ENCODE measurements at regions of chr3 and their contacts with region 1.

Region 1: GRCh38 chr3:108221911-108222852 is at the start of gene IFT57:
- DNase-seq: peak; percentile 93 to 99
- ATAC-seq: peak; percentile 99 to 100 (median 100)
- H3K4me3 ChIP-seq: peak within 1 kb of the TSS; percentile 65 to 91 (median 76)
- H3K27ac ChIP-seq: peak within 1 kb of the TSS in 9 of 10 donors; percentile 23 to 88 (median 72)
- H3K4me1 ChIP-seq: peaks cover 0 to 52% (median 20%) of the 10 kb centered on the region in 9 donors
- H3K27me3 ChIP-seq: no peaks in the 10 kb centered on the region
- CTCF ChIP-seq: no peak
- total RNA-seq, gene IFT57: 15.4 to 29.5 (median 21.0) TPM

Region 2: DNA sequence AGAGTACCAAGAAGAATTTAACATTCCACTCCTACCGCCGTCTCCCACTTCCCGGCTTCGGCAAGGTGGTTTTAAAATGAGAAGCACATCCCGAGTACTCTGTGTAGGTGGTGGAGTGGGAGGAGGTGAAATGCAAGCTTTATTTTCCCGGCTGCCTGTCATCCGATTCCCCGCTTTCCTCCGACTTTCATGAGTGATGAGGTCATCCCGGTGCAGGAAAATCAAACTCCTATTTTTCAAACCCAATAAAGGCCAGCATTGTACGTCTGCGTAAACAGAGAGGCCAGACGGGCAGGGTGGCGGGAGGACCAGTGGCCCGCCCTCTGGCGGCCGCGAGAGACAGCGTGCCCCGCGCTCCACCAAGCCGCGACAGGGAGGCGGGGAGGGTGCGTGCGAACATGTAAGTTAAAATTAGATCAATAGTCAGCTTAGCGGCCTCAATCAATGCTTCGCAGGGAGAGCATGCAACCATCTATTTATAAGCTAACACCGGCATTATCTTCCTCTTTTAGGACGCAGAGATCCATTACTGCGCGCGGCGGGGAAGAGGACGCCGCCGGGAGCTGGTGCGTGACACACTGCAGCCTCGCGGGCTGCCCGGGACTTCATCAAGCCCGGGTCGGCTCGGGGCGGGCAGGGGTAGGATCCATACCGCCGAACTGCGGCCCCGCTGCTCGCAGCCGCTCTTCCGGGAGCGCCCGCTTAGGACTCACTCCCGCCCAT is 294.7 kb before region 1 on chr3:
- intact Hi-C with region 1: loop called in 1 of 10 experiments (anchors 10 kb)
- DNase-seq: peak; percentile 43 to 73
- ATAC-seq: peak; percentile 95 to 99 (median 97)
- H3K4me3 ChIP-seq: peak overlapping the region; percentile 23 to 72 (median 58)
- H3K27ac ChIP-seq: peak overlapping the region in 1 of 10 donors; percentile 5
- H3K4me1 ChIP-seq: peaks cover 0 to 18% (median 8%) of the 10 kb centered on the region in 9 donors
- H3K27me3 ChIP-seq: peaks cover 0 to 21% (median 0%) of the 10 kb centered on the region in 7 donors
- CTCF ChIP-seq: peak; percentile 86 to 98 (median 93)

Region 3: DNA sequence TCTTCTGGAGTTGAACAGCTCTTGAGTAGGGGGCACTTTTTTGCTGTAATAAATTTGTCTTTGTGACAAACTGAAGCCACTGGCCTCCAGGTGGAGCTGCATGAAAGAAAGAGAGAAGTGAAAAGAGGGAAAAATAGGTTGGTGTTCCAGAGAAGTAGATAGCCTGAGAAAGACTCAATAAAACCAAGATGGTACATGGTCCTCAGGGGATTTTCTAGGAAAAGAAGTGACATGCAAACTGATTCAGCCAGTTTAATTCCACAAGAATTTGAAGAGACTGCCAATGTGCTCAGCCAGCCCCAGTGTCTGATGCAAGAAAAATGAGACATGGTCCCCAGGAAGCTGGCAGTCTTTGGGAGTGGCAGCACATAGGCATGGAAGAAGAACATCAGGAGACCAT is 284.0 kb before region 1 on chr3:
- intact Hi-C with region 1: loop called in 3 of 10 experiments (anchors 5 to 10 kb)
- DNase-seq: peak in 1 of 2 donors; percentile 13
- ATAC-seq: peak in 3 of 8 donors; percentile 39 to 51 (median 42)
- H3K4me3 ChIP-seq: no peak overlapping the region
- H3K27ac ChIP-seq: no peak overlapping the region
- H3K4me1 ChIP-seq: peaks cover 0 to 11% (median 0%) of the 10 kb centered on the region in 9 donors
- H3K27me3 ChIP-seq: no peaks in the 10 kb centered on the region
- CTCF ChIP-seq: peak in 8 of 9 donors; percentile 23 to 66 (median 56)

Region 4: DNA sequence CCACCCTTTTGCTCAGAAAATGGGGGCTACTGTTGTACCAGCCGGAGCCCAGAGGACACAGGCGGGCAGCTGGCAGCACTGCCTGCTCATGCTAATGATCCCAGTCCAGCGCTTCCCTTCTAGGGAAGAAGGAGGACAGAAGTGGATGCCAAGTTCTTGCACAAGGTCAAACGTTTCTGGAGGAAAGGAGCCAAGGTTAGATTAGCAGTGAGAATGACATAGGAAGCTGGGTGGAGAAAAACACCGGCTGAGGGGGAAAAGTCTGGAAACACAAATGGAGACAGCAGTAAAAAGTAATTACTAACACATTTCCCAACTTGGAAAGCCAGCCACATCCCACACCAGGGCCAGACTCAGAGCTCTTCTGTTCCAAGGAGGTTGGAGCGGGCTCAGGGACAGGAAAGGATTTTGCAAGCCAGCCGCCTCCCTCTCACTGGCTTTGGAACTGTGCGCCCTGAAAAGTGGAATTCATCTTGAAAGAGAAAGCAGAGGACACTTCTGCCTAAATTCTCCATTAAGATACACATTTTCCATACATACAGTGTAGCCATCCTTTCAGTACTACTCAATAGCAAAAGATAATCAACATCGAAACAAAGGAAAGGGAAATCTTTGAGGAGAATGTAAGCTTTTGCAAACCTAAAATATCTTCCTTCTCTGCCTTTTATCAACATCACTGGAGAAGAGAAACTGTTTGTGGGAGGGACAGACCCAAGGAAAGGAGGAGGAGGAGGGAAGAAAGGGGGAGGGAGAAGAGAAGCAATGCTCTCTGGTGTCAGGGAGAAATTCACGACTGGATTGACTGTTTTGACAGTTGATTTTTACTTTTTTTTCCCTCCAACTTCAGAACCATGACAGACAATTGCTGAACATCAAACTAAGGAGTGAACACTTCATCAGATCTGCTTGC is 264.9 kb before region 1 on chr3:
- intact Hi-C with region 1: loop called in 1 of 10 experiments (anchors 10 kb)
- DNase-seq: peak; percentile 69 to 81
- ATAC-seq: peak; percentile 89 to 96 (median 94)
- H3K4me3 ChIP-seq: peak overlapping the region in 7 of 10 donors; percentile 8 to 33 (median 26)
- H3K27ac ChIP-seq: peak overlapping the region; percentile 63 to 86 (median 71)
- H3K4me1 ChIP-seq: peaks cover 0 to 40% (median 24%) of the 10 kb centered on the region in 9 donors
- H3K27me3 ChIP-seq: no peaks in the 10 kb centered on the region
- CTCF ChIP-seq: no peak

Region 5: DNA sequence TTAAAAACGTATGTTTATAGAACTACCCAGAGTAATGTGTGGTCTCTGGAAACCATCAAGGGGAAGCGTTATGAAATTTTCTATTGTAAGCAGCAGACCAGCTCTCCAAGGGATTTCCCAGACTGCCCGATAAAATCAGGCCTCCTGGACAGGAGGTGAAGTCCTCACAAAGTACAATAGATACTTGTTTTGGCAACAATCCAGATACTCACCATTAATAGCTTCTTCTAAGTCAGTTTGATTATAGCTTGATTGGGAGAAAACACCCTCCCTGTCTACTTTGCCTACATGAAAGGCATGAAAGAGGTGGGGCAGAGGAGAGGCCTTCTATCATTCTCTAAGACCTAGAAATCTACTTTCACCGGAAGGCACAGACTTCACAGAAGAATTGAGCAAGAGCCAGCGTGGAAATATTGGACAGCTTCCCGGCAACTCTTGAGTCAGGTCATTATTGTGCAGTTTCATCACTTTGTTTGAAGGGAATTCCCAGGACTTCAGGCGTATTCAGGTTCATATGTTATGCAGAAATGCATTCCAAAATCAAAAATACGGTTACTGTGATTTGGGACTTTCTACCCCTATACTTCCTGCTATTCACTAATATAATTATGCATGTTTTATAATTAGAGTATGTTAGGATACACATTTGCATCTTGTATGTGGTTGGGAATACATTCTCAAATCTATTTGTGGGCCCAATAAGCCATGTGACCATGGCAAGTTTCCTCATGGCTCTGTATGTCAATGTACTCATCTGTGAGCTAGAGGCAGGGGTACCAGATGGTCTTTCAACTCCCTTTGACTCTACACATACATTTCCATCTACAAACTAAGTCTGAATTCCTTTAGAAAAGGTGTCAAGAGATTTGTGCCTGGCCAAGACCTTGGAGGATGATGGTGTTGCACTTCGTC is 234.9 kb before region 1 on chr3:
- intact Hi-C with region 1: loop called in 1 of 10 experiments (anchors 10 kb)
- DNase-seq: peak; percentile 50 to 85
- ATAC-seq: peak; percentile 78 to 91 (median 88)
- H3K4me3 ChIP-seq: no peak overlapping the region
- H3K27ac ChIP-seq: peak overlapping the region in 8 of 10 donors; percentile 5 to 71 (median 46)
- H3K4me1 ChIP-seq: peaks cover 4 to 57% (median 30%) of the 10 kb centered on the region in 9 donors
- H3K27me3 ChIP-seq: no peaks in the 10 kb centered on the region
- CTCF ChIP-seq: no peak

Region 6: GRCh38 chr3:108090701-108091451 is 131.3 kb before region 1 on chr3 and contains the start of gene CD47:
- intact Hi-C with region 1: loop called in 5 of 10 experiments (anchors 2 to 10 kb)
- DNase-seq: peak; percentile 94 to 98
- ATAC-seq: peak; percentile 92 to 98 (median 96)
- H3K4me3 ChIP-seq: peak within 1 kb of the TSS; percentile 73 to 97 (median 94)
- H3K27ac ChIP-seq: peak within 1 kb of the TSS; percentile 19 to 99 (median 92)
- H3K4me1 ChIP-seq: peaks cover 0 to 47% (median 32%) of the 10 kb centered on the region in 9 donors
- H3K27me3 ChIP-seq: no peaks in the 10 kb centered on the region
- CTCF ChIP-seq: peak in 1 of 9 donors; percentile 11
- total RNA-seq, gene CD47: 36.3 to 76.3 (median 51.2) TPM

Region 7: GRCh38 chr3:108441071-108441507 is 218.9 kb after region 1 on chr3:
- intact Hi-C with region 1: no loop called
- DNase-seq: no peak
- ATAC-seq: no peak
- H3K4me3 ChIP-seq: no peak overlapping the region
- H3K27ac ChIP-seq: no peak overlapping the region
- H3K4me1 ChIP-seq: peaks cover 0 to 3% (median 0%) of the 10 kb centered on the region in 9 donors
- H3K27me3 ChIP-seq: no peaks in the 10 kb centered on the region
- CTCF ChIP-seq: no peak

Region 8: GRCh38 chr3:108528459-108529252 is 306.5 kb after region 1 on chr3:
- intact Hi-C with region 1: no loop called
- DNase-seq: peak in 1 of 2 donors; percentile 20
- ATAC-seq: peak; percentile 81 to 93 (median 85)
- H3K4me3 ChIP-seq: no peak overlapping the region
- H3K27ac ChIP-seq: peak overlapping the region; percentile 47 to 80 (median 68)
- H3K4me1 ChIP-seq: peaks cover 0 to 53% (median 23%) of the 10 kb centered on the region in 9 donors
- H3K27me3 ChIP-seq: no peaks in the 10 kb centered on the region
- CTCF ChIP-seq: no peak

Measured in heart right ventricle (tissue), 16 donors.